Transverse colon (tissue), 4 donors: ENCODE measurements at regions of chr9 and their contacts with region 1.

Region 1: GRCh38 chr9:13962006-13962405 is 351.9 kb downstream of the NFIB start:
- DNase-seq: no peak
- H3K4me3 ChIP-seq: no peak overlapping the region
- H3K27ac ChIP-seq: no peak overlapping the region
- H3K4me1 ChIP-seq: no peaks in the 10 kb centered on the region
- H3K27me3 ChIP-seq: no peaks in the 10 kb centered on the region
- CTCF ChIP-seq: no peak
- EP300 ChIP-seq: no peak
- POLR2A ChIP-seq: no peak

Region 2: DNA sequence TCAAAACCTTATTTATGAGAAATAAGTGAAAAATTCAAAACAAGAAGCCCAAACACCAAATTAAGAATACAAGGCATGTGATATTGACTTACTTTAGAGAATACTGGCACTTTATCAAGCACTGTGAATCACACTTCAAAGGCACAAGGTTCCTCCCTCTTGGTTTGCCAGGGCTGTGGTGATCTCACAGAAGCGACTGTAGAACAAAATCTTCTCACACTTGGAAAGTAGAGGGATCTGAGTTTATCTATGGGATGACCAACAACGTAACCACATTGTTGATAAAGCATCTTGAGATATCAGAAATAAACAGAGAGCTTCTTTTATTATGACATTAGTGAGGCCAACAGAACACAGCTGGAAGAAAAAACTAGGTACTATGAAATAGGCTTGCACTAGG is 56.1 kb after region 1 on chr9:
- in situ Hi-C with region 1: no loop called
- intact Hi-C with region 1: loop called (anchors 2 kb)
- DNase-seq: no peak
- H3K4me3 ChIP-seq: no peak overlapping the region
- H3K27ac ChIP-seq: no peak overlapping the region
- H3K4me1 ChIP-seq: no peaks in the 10 kb centered on the region
- H3K27me3 ChIP-seq: no peaks in the 10 kb centered on the region
- CTCF ChIP-seq: no peak
- EP300 ChIP-seq: no peak
- POLR2A ChIP-seq: no peak

Region 3: DNA sequence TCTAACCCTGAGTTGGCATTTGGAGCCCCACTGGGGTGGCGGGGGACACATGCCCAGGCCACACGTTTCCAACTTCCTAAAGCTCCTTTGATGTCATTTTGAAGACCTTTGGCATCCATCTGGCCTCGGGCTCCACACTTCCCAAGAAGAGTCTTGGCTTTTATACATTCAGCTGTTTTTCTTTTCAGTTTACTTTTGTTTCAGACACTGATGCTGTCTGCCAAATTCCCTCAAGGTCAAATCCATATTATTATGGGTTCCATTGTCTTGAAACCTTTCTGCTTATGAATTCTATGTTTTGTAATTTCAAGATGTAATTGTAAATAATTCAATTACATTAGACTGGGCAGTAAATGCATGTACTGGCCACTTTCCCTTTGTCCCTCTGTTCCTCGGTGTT is 375.6 kb after region 1 on chr9:
- in situ Hi-C with region 1: no loop called
- intact Hi-C with region 1: loop called (anchors 5 kb)
- DNase-seq: no peak
- H3K4me3 ChIP-seq: no peak overlapping the region
- H3K27ac ChIP-seq: no peak overlapping the region
- H3K4me1 ChIP-seq: no peaks in the 10 kb centered on the region
- H3K27me3 ChIP-seq: peaks cover 35% of the 10 kb centered on the region
- CTCF ChIP-seq: no peak
- EP300 ChIP-seq: no peak
- POLR2A ChIP-seq: no peak